Posterior vena cava (tissue), 2 donors: ENCODE measurements at regions of chr1 and their contacts with region 1.

Region 1: DNA sequence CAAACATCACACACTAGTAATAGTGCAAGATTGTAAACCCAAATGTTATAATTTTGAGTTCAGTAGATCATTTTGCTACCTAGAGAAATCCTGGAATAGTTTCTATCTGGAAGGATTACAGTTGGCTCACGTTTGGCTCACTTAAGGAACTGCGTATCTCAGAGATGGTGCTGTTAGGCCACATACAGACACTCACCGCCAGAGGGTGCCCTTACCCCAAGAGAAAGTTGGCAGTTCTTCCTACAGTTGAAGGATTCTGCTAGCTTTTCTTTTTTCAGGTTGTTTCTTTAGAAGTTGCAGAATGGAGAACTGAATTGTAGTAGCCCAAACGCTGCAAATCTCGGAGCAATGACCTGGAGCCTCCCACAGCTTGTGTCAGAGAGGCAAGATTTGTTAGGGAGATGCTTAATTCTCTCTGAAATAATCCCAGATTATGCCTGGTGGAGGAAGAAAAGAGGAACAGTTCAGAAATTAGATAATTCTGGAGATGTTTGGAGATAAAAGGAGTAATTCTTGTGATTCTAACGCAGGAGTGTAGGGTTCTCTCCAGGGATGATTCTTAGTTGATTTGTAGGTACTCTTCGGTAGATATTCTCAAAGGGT is 87.9 kb upstream of the PAPPA2 start:
- DNase-seq: peak; percentile 90

Region 2: GRCh38 chr1:176448342-176448741 is 73.3 kb after region 1 on chr1:
- intact Hi-C with region 1: loop called in 1 of 2 experiments (anchors 2 kb)
- DNase-seq: no peak

Region 3: GRCh38 chr1:176880954-176881595 is 506.0 kb after region 1 on chr1:
- intact Hi-C with region 1: loop called in 1 of 2 experiments (anchors 5 kb)
- DNase-seq: peak; percentile 89